Activated CD4-positive, alpha-beta memory T cell treated with anti-CD3 and anti-CD28 coated beads for 36 hours (primary cell): ENCODE measurements at regions of chr12 and their contacts with region 1.

Region 1: GRCh38 chr12:52884526-52885293 is 20.2 kb downstream of the KRT8 start:
- DNase-seq: peak; percentile 87
- H3K4me3 Mint-ChIP-seq: no peak overlapping the region
- H3K27ac Mint-ChIP-seq: no peak overlapping the region
- H3K4me1 Mint-ChIP-seq: peaks cover 7% of the 10 kb centered on the region
- H3K27me3 Mint-ChIP-seq: peaks cover 2% of the 10 kb centered on the region

Region 2: GRCh38 chr12:52870351-52871290 is 14.1 kb before region 1 on chr12:
- CTCF ChIA-PET with region 1: interaction called, 54 read pairs
- POLR2A ChIA-PET with region 1: no interaction called
- intact Hi-C with region 1: no loop called
- DNase-seq: peak; percentile 83
- H3K4me3 Mint-ChIP-seq: no peak overlapping the region
- H3K27ac Mint-ChIP-seq: no peak overlapping the region
- H3K4me1 Mint-ChIP-seq: peaks cover 26% of the 10 kb centered on the region
- H3K27me3 Mint-ChIP-seq: peaks cover 3% of the 10 kb centered on the region

Region 3: GRCh38 chr12:52903285-52903854 is 18.7 kb after region 1 on chr12:
- CTCF ChIA-PET with region 1: interaction called, 39 read pairs
- POLR2A ChIA-PET with region 1: no interaction called
- intact Hi-C with region 1: no loop called
- DNase-seq: peak; percentile 69
- H3K4me3 Mint-ChIP-seq: peak overlapping the region; percentile 26
- H3K27ac Mint-ChIP-seq: no peak overlapping the region
- H3K4me1 Mint-ChIP-seq: peaks cover 4% of the 10 kb centered on the region
- H3K27me3 Mint-ChIP-seq: peaks cover 3% of the 10 kb centered on the region

Region 4: DNA sequence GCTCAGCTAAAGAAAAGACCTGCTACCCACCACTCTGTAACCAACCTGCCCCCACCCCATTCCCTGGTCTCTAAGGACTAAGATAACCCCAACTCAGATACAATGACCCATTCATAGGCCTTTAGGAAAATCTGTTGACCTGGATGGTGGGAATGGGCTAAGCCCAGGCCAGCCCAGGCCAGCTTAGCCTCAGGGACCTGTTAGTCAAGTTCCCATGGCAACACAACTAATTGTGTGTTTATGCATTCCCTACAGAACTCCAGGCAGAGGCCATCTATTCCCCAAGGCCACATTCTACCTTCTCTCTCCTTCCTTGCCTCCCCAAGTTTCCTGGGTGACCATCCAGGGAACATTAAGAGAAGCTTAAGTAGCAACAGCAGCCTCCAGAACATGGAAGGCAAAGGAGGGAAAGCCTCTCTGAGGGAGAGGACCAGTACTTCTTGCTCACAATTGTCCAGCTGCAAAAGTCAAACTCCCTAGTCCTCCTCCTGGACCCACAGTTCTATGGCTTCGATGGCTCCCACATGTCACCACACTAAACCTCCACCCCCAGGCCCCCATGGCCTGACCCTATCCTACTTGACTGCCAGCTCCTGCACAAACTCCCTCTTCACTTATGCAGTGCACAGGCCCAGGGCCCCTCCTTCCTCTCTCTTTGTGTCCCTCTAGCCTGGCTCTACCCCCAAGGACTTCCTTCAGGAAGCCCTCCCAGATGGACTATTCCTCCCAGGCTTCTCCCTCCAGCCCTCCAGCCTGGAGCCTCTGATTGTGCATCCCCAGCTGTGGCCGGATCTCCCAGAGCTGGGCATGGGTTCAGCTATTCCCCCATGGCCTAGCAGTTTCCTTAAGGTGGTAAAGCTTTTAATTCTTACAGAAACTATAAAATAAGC is 36.5 kb after region 1 on chr12:
- CTCF ChIA-PET with region 1: interaction called, 12 read pairs
- POLR2A ChIA-PET with region 1: no interaction called
- intact Hi-C with region 1: no loop called
- DNase-seq: no peak
- H3K4me3 Mint-ChIP-seq: no peak overlapping the region
- H3K27ac Mint-ChIP-seq: no peak overlapping the region
- H3K4me1 Mint-ChIP-seq: peaks cover 2% of the 10 kb centered on the region
- H3K27me3 Mint-ChIP-seq: no peaks in the 10 kb centered on the region

Region 5: DNA sequence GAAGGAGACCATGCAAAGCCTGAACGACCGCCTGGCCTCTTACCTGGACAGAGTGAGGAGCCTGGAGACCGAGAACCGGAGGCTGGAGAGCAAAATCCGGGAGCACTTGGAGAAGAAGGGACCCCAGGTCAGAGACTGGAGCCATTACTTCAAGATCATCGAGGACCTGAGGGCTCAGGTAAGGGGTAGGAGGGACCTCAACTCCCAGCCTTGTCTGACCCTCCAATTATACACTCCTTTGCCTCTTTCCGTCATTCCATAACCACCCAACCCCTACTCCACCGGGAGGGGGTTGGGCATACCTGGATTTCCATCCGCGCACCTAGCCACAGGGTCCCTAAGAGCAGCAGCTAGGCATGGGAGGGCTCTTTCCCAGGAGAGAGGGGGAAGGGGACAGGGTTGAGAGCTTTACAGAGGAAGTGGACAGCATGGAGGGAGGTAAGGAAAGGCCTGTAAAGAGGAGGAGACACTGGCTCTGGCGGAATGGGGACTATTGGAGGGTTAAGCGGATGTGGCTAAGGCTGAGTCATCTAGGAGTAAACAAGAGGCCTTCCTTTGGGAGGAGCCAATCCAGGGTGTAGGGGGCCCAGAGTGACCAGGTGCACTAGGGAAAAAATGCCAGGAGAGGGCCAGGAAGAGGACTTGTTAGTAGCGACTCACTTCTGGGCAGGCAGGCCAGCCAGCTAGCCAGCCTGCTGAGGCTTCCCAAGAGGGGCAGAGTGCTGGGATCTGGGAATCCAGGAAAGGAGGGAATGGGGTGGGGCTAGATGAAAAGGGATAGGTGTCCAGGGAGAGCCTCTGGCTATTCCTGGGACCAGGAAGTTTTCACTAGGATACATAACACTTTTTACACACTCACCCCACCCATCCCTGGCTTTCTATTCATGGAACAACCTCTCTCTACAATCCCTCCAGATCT is 65.0 kb after region 1 on chr12:
- CTCF ChIA-PET with region 1: interaction called, 37 read pairs
- POLR2A ChIA-PET with region 1: no interaction called
- intact Hi-C with region 1: no loop called
- DNase-seq: no peak
- H3K4me3 Mint-ChIP-seq: peak overlapping the region; percentile 61
- H3K27ac Mint-ChIP-seq: no peak overlapping the region
- H3K4me1 Mint-ChIP-seq: peaks cover 3% of the 10 kb centered on the region
- H3K27me3 Mint-ChIP-seq: no peaks in the 10 kb centered on the region

Region 6: DNA sequence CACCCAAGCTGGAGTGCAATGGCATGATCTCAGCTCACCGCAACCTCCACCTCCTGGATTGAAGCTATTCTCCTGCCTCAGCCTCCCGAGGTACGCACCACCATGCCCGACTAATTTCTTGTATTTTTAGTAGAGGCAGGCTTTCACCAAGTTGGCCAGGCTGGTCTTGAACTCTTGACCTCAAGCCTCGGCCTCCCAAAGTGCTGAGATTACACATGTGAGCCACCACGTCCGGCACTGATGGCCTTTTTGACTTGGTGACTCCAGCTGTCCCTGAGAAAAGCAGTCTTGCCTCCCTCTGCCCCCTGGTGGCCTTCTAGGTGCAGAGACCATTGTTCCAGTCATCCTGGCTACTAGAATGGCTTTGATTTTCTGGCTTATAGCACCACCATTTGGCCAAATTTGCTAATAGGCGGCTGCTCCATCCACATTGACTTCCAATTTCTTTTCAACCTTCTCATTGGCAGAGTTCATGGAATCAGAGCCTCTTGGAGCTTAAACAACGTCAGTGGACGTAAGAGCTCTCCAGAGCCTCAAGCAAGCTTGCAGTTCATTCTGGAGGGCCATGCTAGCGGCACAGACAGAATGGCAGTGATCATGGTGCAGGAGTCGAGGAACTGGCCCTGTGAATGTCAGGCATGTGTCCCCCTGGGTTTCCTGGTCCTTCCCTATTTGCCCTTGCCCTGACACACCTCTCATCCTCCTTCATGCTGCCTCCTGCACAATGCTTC is 96.1 kb after region 1 on chr12:
- CTCF ChIA-PET with region 1: interaction called, 557 read pairs
- POLR2A ChIA-PET with region 1: no interaction called
- intact Hi-C with region 1: loop called (anchors 1 kb)
- DNase-seq: peak; percentile 89
- H3K4me3 Mint-ChIP-seq: no peak overlapping the region
- H3K27ac Mint-ChIP-seq: peak overlapping the region; percentile 9
- H3K4me1 Mint-ChIP-seq: no peaks in the 10 kb centered on the region
- H3K27me3 Mint-ChIP-seq: peaks cover 34% of the 10 kb centered on the region